CD4-positive, alpha-beta T cell (primary cell): ENCODE measurements at regions of chr12 and their contacts with region 1.

Region 1: DNA sequence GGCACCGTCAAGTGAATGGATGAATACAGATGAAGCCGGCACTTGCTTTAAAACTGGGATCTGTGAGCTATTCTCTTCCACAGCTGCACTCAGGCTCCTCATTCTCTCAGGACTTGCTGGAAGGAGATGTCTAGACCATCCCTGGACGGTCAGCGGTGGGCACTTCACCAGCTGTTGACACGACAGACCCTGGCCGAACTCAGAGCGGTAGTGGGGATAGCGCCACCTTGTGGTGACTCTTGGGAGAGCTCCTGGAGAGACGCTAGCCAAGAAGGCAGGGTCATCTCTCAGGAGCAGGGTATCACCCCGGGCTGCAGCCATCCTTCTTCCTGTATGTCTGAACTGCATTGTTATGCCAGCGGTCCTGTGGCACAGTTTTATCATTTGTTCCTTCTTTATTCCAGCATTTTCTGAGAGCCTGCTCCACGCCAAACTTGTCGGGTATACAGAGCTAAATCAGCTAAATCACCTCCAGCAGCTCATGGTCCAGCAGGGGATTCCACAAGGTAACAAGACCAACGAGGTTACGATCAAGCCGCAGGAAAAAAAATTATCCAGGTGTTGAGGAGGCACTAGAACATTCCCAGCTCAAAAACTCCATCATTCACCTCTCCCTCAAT is 10.0 kb downstream of the WNT1 start:
- DNase-seq: peak; percentile 50 to 85 (median 68)
- ATAC-seq: peak; percentile 76
- H3K4me3 ChIP-seq: no peak overlapping the region
- H3K4me3 Mint-ChIP-seq: no peak overlapping the region
- H3K27ac ChIP-seq: no peak overlapping the region
- H3K27ac Mint-ChIP-seq: no peak overlapping the region
- H3K4me1 ChIP-seq: peaks cover 7% of the 10 kb centered on the region
- H3K4me1 Mint-ChIP-seq: peaks cover 6% of the 10 kb centered on the region
- H3K27me3 ChIP-seq: peaks cover 0 to 23% of the 10 kb centered on the region in 2 experiments
- H3K27me3 Mint-ChIP-seq: peaks cover 50% of the 10 kb centered on the region
- CTCF ChIP-seq: peak; percentile 81

Region 2: GRCh38 chr12:47491516-47492305 is 1496.4 kb before region 1 on chr12:
- CTCF ChIA-PET with region 1: no interaction called
- POLR2A ChIA-PET with region 1: no interaction called
- intact Hi-C with region 1: no loop called
- DNase-seq: no peak
- ATAC-seq: no peak
- H3K4me3 ChIP-seq: no peak overlapping the region
- H3K4me3 Mint-ChIP-seq: no peak overlapping the region
- H3K27ac ChIP-seq: no peak overlapping the region
- H3K27ac Mint-ChIP-seq: no peak overlapping the region
- H3K4me1 ChIP-seq: no peaks in the 10 kb centered on the region
- H3K4me1 Mint-ChIP-seq: no peaks in the 10 kb centered on the region
- H3K27me3 ChIP-seq: no peaks in the 10 kb centered on the region
- H3K27me3 Mint-ChIP-seq: no peaks in the 10 kb centered on the region
- CTCF ChIP-seq: no peak

Region 3: DNA sequence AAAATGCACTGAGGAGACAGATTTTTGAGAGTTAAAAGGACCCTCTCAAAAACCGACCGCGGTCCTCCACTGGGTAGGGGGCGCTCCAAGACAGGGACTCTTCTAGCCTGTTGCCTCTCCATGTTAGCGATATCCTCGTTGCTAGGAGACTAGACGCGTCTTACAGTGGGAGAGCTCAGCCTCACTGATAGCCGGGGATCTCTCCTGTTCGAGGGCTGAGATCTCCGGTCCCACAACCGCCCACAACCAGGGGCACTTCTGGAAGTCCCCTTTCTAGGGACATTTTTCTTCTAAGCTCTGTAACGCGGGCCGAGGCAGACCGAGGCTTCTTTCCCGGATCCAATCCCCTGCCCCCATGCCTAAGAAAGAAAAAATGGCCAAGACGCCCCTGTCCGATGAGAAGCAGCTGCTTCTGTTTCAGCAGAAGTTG is 84.1 kb before region 1 on chr12:
- CTCF ChIA-PET with region 1: interaction called, 4 read pairs
- POLR2A ChIA-PET with region 1: no interaction called
- intact Hi-C with region 1: loop called in 1 of 2 experiments (anchors 5 kb)
- DNase-seq: peak; percentile 73 to 93 (median 82)
- ATAC-seq: peak; percentile 100
- H3K4me3 ChIP-seq: peak overlapping the region; percentile 37
- H3K4me3 Mint-ChIP-seq: peak overlapping the region; percentile 54
- H3K27ac ChIP-seq: no peak overlapping the region
- H3K27ac Mint-ChIP-seq: no peak overlapping the region
- H3K4me1 ChIP-seq: peaks cover 13% of the 10 kb centered on the region
- H3K4me1 Mint-ChIP-seq: peaks cover 4% of the 10 kb centered on the region
- H3K27me3 ChIP-seq: no peaks in the 10 kb centered on the region
- H3K27me3 Mint-ChIP-seq: peaks cover 5% of the 10 kb centered on the region
- CTCF ChIP-seq: peak; percentile 80

Region 4: GRCh38 chr12:48957141-48958048 is 30.7 kb before region 1 on chr12 and contains the start of gene ARF3:
- CTCF ChIA-PET with region 1: interaction called, 20 read pairs
- POLR2A ChIA-PET with region 1: interaction called, 3 read pairs
- intact Hi-C with region 1: no loop called
- DNase-seq: peak; percentile 84 to 97 (median 92)
- ATAC-seq: peak; percentile 96
- H3K4me3 ChIP-seq: peak within 1 kb of the TSS; percentile 86
- H3K4me3 Mint-ChIP-seq: peak within 1 kb of the TSS; percentile 100
- H3K27ac ChIP-seq: peak within 1 kb of the TSS; percentile 35 to 51
- H3K27ac Mint-ChIP-seq: peak within 1 kb of the TSS; percentile 91
- H3K4me1 ChIP-seq: peaks cover 25% of the 10 kb centered on the region
- H3K4me1 Mint-ChIP-seq: peaks cover 54% of the 10 kb centered on the region
- H3K27me3 ChIP-seq: no peaks in the 10 kb centered on the region
- H3K27me3 Mint-ChIP-seq: peaks cover 6% of the 10 kb centered on the region
- CTCF ChIP-seq: no peak
- total RNA-seq, gene ARF3: 32.0 to 34.6 TPM

Region 5: DNA sequence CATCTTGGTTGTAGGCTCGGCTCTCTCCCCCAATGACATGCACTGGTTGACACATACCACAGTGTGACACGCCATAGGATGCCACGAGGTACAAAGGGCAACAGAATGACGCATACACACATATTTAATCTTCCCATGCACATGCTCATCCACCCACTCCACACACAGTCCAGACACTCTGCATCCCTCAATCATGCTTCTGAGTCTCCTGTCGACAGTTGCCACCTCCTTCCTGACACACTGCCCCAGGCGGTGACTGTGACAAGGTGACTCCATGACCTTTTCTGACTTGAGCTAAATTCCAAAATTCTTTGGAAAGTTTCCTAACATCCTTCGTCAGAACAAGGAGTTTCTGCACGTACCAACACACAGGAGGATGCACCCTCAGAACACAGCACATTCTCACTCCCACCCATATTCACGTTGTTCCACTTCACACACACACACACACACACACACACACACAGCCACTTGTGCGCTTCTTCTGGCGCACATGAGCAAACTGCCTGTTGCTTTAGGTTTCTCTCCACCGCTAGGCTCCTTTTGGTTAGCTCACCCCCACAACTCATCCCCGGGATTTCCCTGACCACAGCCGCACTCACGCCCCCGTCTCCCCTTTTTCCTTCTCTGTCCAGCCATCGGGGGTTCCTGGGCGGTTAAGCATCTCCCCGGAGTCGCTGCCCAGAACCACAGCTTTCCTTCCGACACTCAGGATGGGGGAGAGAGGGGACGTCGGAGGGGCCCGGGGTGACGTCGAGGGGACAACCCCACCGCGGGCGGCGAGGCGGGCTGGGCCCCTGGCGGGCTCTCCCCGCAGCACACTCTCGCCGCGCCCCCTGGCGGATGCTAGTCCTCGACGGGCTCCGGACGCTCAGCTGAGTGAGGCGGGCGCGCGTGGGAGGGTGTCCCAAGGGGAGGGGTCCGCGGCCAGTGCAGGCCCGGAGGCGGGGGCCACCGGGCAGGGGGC is 10.5 kb before region 1 on chr12:
- CTCF ChIA-PET with region 1: interaction called, 62 read pairs
- POLR2A ChIA-PET with region 1: interaction called, 6 read pairs
- intact Hi-C with region 1: no loop called
- DNase-seq: peak; percentile 67 to 93 (median 76)
- ATAC-seq: peak; percentile 47
- H3K4me3 ChIP-seq: no peak overlapping the region
- H3K4me3 Mint-ChIP-seq: peak overlapping the region; percentile 9
- H3K27ac ChIP-seq: no peak overlapping the region
- H3K27ac Mint-ChIP-seq: peak overlapping the region; percentile 16
- H3K4me1 ChIP-seq: peaks cover 64% of the 10 kb centered on the region
- H3K4me1 Mint-ChIP-seq: peaks cover 54% of the 10 kb centered on the region
- H3K27me3 ChIP-seq: peaks cover 33 to 45% of the 10 kb centered on the region in 2 experiments
- H3K27me3 Mint-ChIP-seq: peaks cover 70% of the 10 kb centered on the region
- CTCF ChIP-seq: peak; percentile 79

Region 6: DNA sequence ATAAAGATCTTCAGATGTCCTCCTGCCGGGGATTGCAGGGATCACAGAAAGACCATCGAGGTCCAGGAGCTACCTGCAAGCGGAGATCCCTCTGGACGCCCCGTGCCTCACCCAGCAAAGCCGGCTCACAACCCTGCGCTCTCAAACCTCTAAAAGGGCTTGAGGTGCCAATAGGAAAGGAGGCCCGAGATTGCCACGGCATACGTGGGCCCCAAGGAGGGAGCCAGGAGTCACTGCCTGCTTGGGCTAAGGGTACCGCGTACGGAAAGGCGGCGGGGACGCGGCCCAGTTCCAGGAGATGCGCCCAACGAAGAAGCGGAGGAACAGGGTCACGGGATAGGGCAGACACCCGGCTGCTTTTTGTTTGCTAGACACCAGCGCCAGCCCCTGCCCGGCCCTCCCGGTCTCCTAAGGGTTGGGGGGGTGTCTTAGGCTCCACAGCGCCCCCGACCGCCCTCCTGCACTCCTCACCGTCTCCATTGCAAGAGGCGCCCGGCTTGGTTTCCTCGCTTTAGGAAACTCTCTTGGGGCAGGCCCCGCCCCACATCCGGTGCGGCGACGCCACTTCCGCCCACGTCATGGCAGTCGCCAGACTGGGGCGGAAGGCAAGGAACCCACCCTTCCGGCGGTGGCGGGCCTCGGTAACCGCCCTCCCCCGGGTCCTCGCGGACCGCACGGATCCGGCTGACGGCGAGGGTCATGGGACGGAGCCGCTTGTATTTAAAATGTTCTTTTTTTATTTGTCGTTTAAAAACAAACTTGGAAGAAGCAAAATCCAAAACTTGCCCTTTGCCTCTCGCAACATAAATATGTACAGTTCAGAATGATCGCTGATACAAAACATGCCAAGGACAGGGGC is 30.4 kb after region 1 on chr12 and contains the start of gene PRKAG1:
- CTCF ChIA-PET with region 1: interaction called, 16 read pairs
- POLR2A ChIA-PET with region 1: no interaction called
- intact Hi-C with region 1: no loop called
- DNase-seq: peak; percentile 94 to 99 (median 96)
- ATAC-seq: peak; percentile 90
- H3K4me3 ChIP-seq: peak within 1 kb of the TSS; percentile 73
- H3K4me3 Mint-ChIP-seq: peak within 1 kb of the TSS; percentile 97
- H3K27ac ChIP-seq: peak within 1 kb of the TSS; percentile 94 to 97
- H3K27ac Mint-ChIP-seq: peak within 1 kb of the TSS; percentile 99
- H3K4me1 ChIP-seq: peaks cover 27% of the 10 kb centered on the region
- H3K4me1 Mint-ChIP-seq: peaks cover 50% of the 10 kb centered on the region
- H3K27me3 ChIP-seq: no peaks in the 10 kb centered on the region
- H3K27me3 Mint-ChIP-seq: no peaks in the 10 kb centered on the region
- CTCF ChIP-seq: peak; percentile 60
- total RNA-seq, gene PRKAG1: 34.6 to 38.2 TPM

Region 7: DNA sequence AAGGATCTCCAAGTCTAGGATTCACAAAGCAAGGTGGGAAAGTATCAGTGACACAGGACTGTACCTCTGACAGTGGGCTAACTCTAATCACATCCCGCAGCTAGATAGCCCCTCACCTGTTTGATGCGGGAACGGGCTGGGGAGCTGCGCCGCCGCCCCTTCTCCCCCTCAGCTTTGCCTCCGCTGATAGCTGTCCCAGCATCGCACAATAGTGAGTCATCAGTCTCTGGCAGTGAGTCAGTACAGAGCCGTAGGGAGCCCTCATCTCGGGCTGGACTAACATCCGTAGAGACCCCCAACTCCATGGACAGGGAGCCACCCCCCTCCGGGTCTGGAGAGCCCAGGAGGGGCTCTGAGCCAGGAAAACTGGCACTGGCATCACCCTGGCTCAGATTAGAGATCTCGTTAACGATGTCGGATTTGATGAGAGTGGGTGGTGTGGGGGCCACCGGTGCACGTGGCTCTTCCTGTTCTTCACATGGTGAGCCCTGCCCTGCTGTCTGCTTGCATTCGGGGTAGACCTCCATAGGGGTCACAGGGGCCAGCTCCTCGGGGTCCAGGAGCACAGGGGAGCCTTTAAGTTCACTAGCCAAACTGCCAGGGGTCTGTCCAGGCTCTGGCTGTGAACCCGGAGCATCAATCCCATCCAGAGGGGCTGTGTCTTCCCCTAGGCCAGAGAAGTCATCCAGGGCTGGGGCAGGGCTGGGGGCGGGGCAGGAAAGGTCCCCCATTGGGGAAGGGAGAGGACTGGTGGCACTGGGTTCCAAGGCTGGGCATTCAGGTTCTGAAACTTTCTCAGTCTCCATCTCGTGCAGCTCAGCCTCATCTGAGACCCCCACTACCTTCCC is 61.6 kb after region 1 on chr12:
- CTCF ChIA-PET with region 1: no interaction called
- POLR2A ChIA-PET with region 1: no interaction called
- intact Hi-C with region 1: no loop called
- DNase-seq: no peak
- ATAC-seq: no peak
- H3K4me3 ChIP-seq: no peak overlapping the region
- H3K4me3 Mint-ChIP-seq: no peak overlapping the region
- H3K27ac ChIP-seq: no peak overlapping the region
- H3K27ac Mint-ChIP-seq: no peak overlapping the region
- H3K4me1 ChIP-seq: peaks cover 11% of the 10 kb centered on the region
- H3K4me1 Mint-ChIP-seq: peaks cover 9% of the 10 kb centered on the region
- H3K27me3 ChIP-seq: no peaks in the 10 kb centered on the region
- H3K27me3 Mint-ChIP-seq: no peaks in the 10 kb centered on the region
- CTCF ChIP-seq: no peak